ENCODE measurements at regions of chr20 and their contacts with region 1.

Region 1: GRCh38 chr20:6395695-6396094 is 272.9 kb upstream of the FERMT1 start:
- DNase-seq: no peak
- H3K4me3 ChIP-seq: no peak overlapping the region
- H3K27ac ChIP-seq: no peak overlapping the region
- H3K4me1 ChIP-seq: no peaks in the 10 kb centered on the region
- H3K27me3 ChIP-seq: no peaks in the 10 kb centered on the region
- CTCF ChIP-seq: no peak
- EP300 ChIP-seq: no peak
- POLR2A ChIP-seq: no peak

Region 2: DNA sequence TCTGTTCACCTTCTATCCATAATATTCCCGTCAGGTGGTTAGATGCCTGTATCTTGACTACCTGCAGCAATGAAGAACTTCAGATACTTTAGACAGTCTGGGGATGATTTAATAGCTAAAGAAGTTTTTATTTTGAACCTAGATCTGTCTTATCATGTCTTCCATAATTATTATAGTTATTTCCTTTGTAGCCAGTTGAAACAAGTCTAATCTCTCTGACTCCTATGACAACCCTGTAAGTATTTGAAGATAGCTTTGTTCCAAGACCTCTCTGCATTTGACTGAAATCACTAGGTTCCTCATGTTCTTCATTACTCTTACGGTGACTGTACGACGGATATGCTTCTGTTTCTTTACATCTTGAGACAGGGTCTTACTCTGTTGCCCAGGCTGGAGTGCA is 55.1 kb after region 1 on chr20:
- in situ Hi-C with region 1: no loop called
- intact Hi-C with region 1: loop called (anchors 10 kb)
- DNase-seq: no peak
- H3K4me3 ChIP-seq: no peak overlapping the region
- H3K27ac ChIP-seq: no peak overlapping the region
- H3K4me1 ChIP-seq: no peaks in the 10 kb centered on the region
- H3K27me3 ChIP-seq: no peaks in the 10 kb centered on the region
- CTCF ChIP-seq: no peak
- EP300 ChIP-seq: no peak
- POLR2A ChIP-seq: no peak

Measured in transverse colon (tissue), 4 donors.